CD14-positive monocyte (primary cell): ENCODE measurements at regions of chr20 and their contacts with region 1.

Region 1: GRCh38 chr20:2523919-2524708 is 12.3 kb upstream of the TMC2 start:
- DNase-seq: peak; percentile 74 to 78 (median 74)
- H3K4me3 ChIP-seq: peak overlapping the region; percentile 94 to 97 (median 95)
- H3K4me3 Mint-ChIP-seq: peak overlapping the region; percentile 95
- H3K27ac ChIP-seq: peak overlapping the region in 1 of 2 donors; percentile 66
- H3K27ac Mint-ChIP-seq: peak overlapping the region in 2 of 7 donors; percentile 20 to 27
- H3K4me1 ChIP-seq: peaks cover 11% of the 10 kb centered on the region in 2 donors
- H3K4me1 Mint-ChIP-seq: peaks cover 19% of the 10 kb centered on the region
- H3K27me3 ChIP-seq: peaks cover 7 to 40% of the 10 kb centered on the region in 2 donors
- H3K27me3 Mint-ChIP-seq: peaks cover 42 to 50% (median 48%) of the 10 kb centered on the region in 3 donors
- CTCF ChIP-seq: peak; percentile 98

Region 2: DNA sequence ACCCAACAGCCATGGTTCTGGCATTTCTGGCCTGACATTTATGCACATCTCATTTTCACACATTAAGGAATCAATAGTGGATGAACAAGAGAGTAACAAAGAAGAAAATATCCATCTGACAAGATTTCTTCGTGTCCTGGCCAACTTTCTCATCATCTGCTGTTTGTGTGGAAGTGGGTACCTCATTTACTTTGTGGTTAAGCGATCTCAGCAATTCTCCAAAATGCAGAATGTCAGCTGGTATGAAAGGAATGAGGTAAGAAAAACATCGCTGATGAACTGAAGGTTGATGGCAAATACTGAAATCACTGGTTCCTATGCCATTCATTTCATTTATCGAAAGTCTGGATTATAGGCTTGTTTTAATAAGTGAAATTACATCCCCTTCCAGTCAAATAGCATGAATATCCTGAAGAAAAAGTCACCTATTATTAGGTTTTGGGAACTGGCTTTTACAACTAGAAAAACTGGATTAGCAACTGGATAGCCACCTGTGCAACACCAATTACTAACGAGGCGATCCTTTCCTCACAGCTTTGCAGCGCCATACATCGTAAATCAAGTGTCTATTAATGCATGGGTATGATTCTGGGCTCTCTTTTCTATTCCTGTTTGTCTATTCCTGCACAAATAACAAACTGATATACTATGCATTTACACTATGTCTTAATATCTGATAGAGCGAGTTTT is 78.1 kb after region 1 on chr20:
- intact Hi-C with region 1: no loop called
- DNase-seq: no peak
- H3K4me3 ChIP-seq: no peak overlapping the region
- H3K4me3 Mint-ChIP-seq: no peak overlapping the region
- H3K27ac ChIP-seq: no peak overlapping the region
- H3K27ac Mint-ChIP-seq: no peak overlapping the region
- H3K4me1 ChIP-seq: no peaks in the 10 kb centered on the region
- H3K4me1 Mint-ChIP-seq: no peaks in the 10 kb centered on the region
- H3K27me3 ChIP-seq: peaks cover 0 to 3% of the 10 kb centered on the region in 2 donors
- H3K27me3 Mint-ChIP-seq: peaks cover 10 to 25% (median 11%) of the 10 kb centered on the region in 3 donors
- CTCF ChIP-seq: no peak

Region 3: GRCh38 chr20:2651772-2652723 is 127.9 kb after region 1 on chr20 and contains the start of gene NOP56:
- intact Hi-C with region 1: no loop called
- DNase-seq: peak; percentile 83 to 89 (median 89)
- H3K4me3 ChIP-seq: peak within 1 kb of the TSS; percentile 85 to 98 (median 89)
- H3K4me3 Mint-ChIP-seq: peak within 1 kb of the TSS; percentile 88 to 96
- H3K27ac ChIP-seq: peak within 1 kb of the TSS; percentile 33 to 77
- H3K27ac Mint-ChIP-seq: peak within 1 kb of the TSS; percentile 74 to 95 (median 84)
- H3K4me1 ChIP-seq: peaks cover 17 to 33% of the 10 kb centered on the region in 2 donors
- H3K4me1 Mint-ChIP-seq: peaks cover 17% of the 10 kb centered on the region
- H3K27me3 ChIP-seq: no peaks in the 10 kb centered on the region
- H3K27me3 Mint-ChIP-seq: no peaks in the 10 kb centered on the region
- CTCF ChIP-seq: no peak
- polyA plus RNA-seq, gene NOP56: 27.3 to 102 (median 33.1) TPM

Region 4: GRCh38 chr20:2663887-2664719 is 140.0 kb after region 1 on chr20 and contains the start of gene IDH3B:
- intact Hi-C with region 1: loop called in 1 of 2 experiments (anchors 10 kb)
- DNase-seq: peak; percentile 96 to 98 (median 97)
- H3K4me3 ChIP-seq: peak within 1 kb of the TSS; percentile 79 to 98 (median 86)
- H3K4me3 Mint-ChIP-seq: peak within 1 kb of the TSS; percentile 90 to 94
- H3K27ac ChIP-seq: peak within 1 kb of the TSS; percentile 97
- H3K27ac Mint-ChIP-seq: peak within 1 kb of the TSS; percentile 92 to 96 (median 95)
- H3K4me1 ChIP-seq: peaks cover 15 to 16% of the 10 kb centered on the region in 2 donors
- H3K4me1 Mint-ChIP-seq: peaks cover 12% of the 10 kb centered on the region
- H3K27me3 ChIP-seq: peaks cover 0 to 2% of the 10 kb centered on the region in 2 donors
- H3K27me3 Mint-ChIP-seq: peaks cover 2 to 7% (median 6%) of the 10 kb centered on the region in 3 donors
- CTCF ChIP-seq: no peak
- polyA plus RNA-seq, gene IDH3B: 102 to 224 (median 103) TPM